ENCODE measurements at regions of chr6 and their contacts with region 1.

Region 1: DNA sequence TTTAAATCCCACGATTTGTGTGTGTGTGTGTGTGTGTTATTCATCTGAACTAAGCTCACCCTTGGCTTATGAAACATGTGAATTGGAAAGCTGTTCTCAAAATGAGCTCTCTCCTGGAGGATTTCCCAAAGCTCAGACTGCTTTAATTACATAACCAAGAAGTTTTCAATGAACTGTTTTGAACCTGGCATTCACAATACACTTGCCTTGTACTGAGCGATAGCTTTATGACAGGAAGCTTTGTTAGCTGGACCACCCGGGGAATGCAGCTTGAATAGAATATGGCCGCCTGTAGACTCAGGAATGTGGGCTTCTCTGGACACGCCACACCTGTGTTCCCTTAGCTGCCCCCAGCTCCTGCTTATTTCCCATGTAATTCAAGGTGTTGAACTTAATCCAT is 71.4 kb upstream of the PREP start:
- DNase-seq: no peak
- ATAC-seq: no peak
- H3K4me3 ChIP-seq: no peak overlapping the region
- H3K27ac ChIP-seq: no peak overlapping the region
- H3K4me1 ChIP-seq: no peaks in the 10 kb centered on the region; the same call in 1 of the 2 replicates
- H3K27me3 ChIP-seq: no peaks in the 10 kb centered on the region
- CTCF ChIP-seq: no peak
- EP300 ChIP-seq: no peak
- POLR2A ChIP-seq: no peak
- RAD21 ChIP-seq: no peak

Region 2: DNA sequence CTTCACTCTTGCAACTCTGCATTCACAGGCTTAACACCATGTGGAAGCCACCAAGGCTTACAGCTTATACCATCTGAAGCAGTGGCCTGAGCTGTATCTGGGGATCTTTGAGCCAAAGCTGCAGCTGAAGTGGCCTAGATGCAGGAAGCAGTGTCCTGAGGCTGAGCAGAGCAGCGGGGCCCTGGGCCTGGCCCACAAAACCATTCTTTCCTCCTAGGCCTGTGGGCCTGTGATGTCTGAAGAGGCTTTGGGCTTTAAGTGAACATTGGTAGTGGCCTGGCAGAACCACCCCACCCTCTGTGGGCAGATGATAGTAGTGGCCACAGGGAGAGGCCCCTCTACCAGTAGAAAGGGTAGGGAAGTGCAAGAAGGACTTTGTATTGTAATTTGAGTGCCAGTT is 64.5 kb before region 1 on chr6:
- CTCF ChIA-PET with region 1: no interaction called
- POLR2A ChIA-PET with region 1: no interaction called
- RAD21 ChIA-PET with region 1: no interaction called
- SMC1A ChIA-PET with region 1: no interaction called
- in situ Hi-C with region 1: no loop called
- intact Hi-C with region 1: no loop called
- DNase-seq: no peak
- ATAC-seq: no peak
- H3K4me3 ChIP-seq: no peak overlapping the region
- H3K27ac ChIP-seq: no peak overlapping the region
- H3K4me1 ChIP-seq: no peaks in the 10 kb centered on the region
- H3K27me3 ChIP-seq: no peaks in the 10 kb centered on the region; a peak in 1 of 4 replicates
- CTCF ChIP-seq: no peak
- EP300 ChIP-seq: no peak
- POLR2A ChIP-seq: no peak
- RAD21 ChIP-seq: no peak

Region 3: DNA sequence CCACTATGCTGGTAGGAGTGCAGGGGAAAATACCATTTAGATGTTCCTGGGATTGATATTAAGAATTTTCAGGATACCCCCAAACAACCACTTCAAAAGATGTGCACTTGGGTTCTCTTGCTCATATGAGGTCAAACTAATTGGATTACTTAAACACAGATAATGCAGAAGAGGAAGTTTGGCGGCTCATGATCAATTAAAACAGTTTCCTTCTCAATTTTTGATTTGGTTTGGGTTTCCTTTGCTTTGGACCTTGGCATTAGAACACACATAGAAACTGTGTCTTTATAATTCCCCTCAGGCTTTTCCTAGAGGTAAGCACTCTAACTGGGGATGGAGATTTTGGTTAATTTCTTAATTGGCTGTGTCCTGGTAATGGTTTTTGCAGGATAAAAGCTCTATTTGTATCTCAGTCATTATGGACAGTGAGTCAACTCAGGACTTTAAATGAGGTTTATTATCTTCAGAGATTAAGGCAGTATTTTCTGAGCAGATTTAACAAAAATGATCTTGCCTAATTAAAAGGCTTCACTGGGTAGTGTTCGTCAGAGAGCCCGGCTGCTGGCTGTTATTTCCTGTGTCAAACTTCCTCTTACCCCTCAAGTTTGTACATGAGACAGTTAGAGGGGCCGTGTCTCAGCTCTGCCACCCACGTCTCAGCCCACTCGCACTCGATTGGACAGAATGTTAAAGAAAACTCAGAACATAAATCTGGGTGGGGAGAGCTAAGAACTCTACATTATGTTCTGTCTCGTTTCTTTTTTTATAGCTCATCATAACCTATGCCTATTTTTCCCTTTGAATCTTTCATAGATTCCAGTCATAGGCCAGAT is 21.1 kb before region 1 on chr6:
- CTCF ChIA-PET with region 1: interaction called, 3 read pairs
- POLR2A ChIA-PET with region 1: interaction called, 7 read pairs
- RAD21 ChIA-PET with region 1: interaction called, 10 read pairs
- SMC1A ChIA-PET with region 1: interaction called, 12 read pairs
- in situ Hi-C with region 1: no loop called
- intact Hi-C with region 1: no loop called
- DNase-seq: peak; percentile 54
- ATAC-seq: peak; percentile 89
- H3K4me3 ChIP-seq: no peak overlapping the region
- H3K27ac ChIP-seq: peak overlapping the region; percentile 35
- H3K4me1 ChIP-seq: peaks cover 15% of the 10 kb centered on the region
- H3K27me3 ChIP-seq: no peaks in the 10 kb centered on the region
- CTCF ChIP-seq: no peak
- EP300 ChIP-seq: peak; percentile 49 to 63; a peak in 3 of 4 replicates
- POLR2A ChIP-seq: no peak
- RAD21 ChIP-seq: no peak

Region 4: GRCh38 chr6:105459049-105459448 is 15.2 kb before region 1 on chr6:
- CTCF ChIA-PET with region 1: interaction called, 6 read pairs
- POLR2A ChIA-PET with region 1: interaction called, 8 read pairs
- RAD21 ChIA-PET with region 1: interaction called, 10 read pairs
- SMC1A ChIA-PET with region 1: interaction called, 10 read pairs
- in situ Hi-C with region 1: no loop called
- intact Hi-C with region 1: no loop called
- DNase-seq: peak; percentile 98
- ATAC-seq: peak; percentile 91
- H3K4me3 ChIP-seq: no peak overlapping the region
- H3K27ac ChIP-seq: peak overlapping the region; percentile 88
- H3K4me1 ChIP-seq: peaks cover 16% of the 10 kb centered on the region
- H3K27me3 ChIP-seq: no peaks in the 10 kb centered on the region
- CTCF ChIP-seq: no peak
- EP300 ChIP-seq: peak; percentile 99 to 100
- POLR2A ChIP-seq: peak; percentile 80
- RAD21 ChIP-seq: no peak

Region 5: DNA sequence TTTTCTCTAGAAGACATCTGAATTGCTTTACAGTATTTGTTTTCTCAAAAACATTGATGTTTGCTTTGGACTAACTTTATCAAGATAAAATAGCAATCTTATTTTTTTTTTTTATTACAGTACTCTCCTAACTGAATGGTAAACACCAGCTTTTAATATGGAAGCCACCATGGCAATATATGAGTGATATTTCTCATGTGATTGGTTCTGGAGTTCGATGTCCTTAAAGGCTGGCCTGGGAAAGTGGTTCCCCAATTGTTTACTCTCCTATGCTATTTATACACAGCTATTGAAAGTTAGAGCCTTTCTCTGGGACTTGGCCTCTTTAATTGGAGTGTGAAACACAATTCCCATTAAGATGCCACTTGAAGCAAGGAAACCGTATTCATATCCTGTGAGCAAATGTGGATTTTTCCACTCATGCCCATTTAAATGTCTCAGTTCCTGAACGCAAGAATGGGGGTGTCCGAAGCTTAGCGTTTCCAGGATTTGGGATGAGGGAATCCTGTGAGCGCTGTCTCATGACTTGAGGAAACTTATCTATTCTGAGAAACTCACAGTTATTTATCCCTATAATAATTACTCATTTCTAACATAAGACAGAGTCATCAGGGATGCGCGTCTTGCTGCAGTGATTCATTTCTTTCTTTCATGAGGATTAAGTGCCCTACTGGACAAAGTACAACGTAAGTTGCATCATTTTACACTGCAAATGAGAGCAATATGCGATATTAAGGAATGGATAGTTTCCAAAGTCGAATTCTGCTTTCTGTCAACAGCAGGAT is 71.9 kb after region 1 on chr6:
- CTCF ChIA-PET with region 1: no interaction called
- POLR2A ChIA-PET with region 1: no interaction called
- RAD21 ChIA-PET with region 1: no interaction called
- SMC1A ChIA-PET with region 1: no interaction called
- in situ Hi-C with region 1: no loop called
- intact Hi-C with region 1: no loop called
- DNase-seq: no peak
- ATAC-seq: no peak
- H3K4me3 ChIP-seq: no peak overlapping the region
- H3K27ac ChIP-seq: no peak overlapping the region
- H3K4me1 ChIP-seq: no peaks in the 10 kb centered on the region
- H3K27me3 ChIP-seq: no peaks in the 10 kb centered on the region
- CTCF ChIP-seq: no peak
- EP300 ChIP-seq: no peak
- POLR2A ChIP-seq: no peak
- RAD21 ChIP-seq: no peak

Measured in GM12878 (cell line).